IMR-90 (cell line): ENCODE measurements at regions of chr15 and their contacts with region 1.

Region 1: GRCh38 chr15:50686468-50687301 is at the start of gene TRPM7:
- DNase-seq: peak; percentile 81
- ATAC-seq: peak; percentile 84
- H3K4me3 ChIP-seq: peak within 1 kb of the TSS; percentile 96
- H3K27ac ChIP-seq: peak within 1 kb of the TSS; percentile 93
- H3K4me1 ChIP-seq: peaks cover 3% of the 10 kb centered on the region; the same call in 1 of the 2 replicates
- H3K27me3 ChIP-seq: no peaks in the 10 kb centered on the region
- CTCF ChIP-seq: no peak
- POLR2A ChIP-seq: peak; percentile 79; the same call in 1 of the 2 replicates
- RAD21 ChIP-seq: no peak
- total RNA-seq, gene TRPM7: 27.8 and 49.4 TPM in 2 replicates

Region 2: GRCh38 chr15:50765195-50765973 is 78.7 kb after region 1 on chr15 and contains the start of gene SPPL2A:
- CTCF ChIA-PET with region 1: no interaction called
- POLR2A ChIA-PET with region 1: no interaction called
- dilution Hi-C with region 1: no loop called
- in situ Hi-C with region 1: no loop called
- intact Hi-C with region 1: loop called (anchors 2 kb)
- DNase-seq: peak; percentile 84
- ATAC-seq: peak; percentile 98
- H3K4me3 ChIP-seq: peak within 1 kb of the TSS; percentile 57
- H3K27ac ChIP-seq: peak within 1 kb of the TSS; percentile 91
- H3K4me1 ChIP-seq: peaks cover 2% of the 10 kb centered on the region
- H3K27me3 ChIP-seq: no peaks in the 10 kb centered on the region
- CTCF ChIP-seq: no peak
- POLR2A ChIP-seq: peak; percentile 79
- RAD21 ChIP-seq: no peak
- total RNA-seq, gene SPPL2A: 53.8 and 82.5 TPM in 2 replicates